Activated naive CD4-positive, alpha-beta T cell treated with anti-CD3 and anti-CD28 coated beads for 36 hours (primary cell): ENCODE measurements at regions of chr16 and their contacts with region 1.

Region 1: DNA sequence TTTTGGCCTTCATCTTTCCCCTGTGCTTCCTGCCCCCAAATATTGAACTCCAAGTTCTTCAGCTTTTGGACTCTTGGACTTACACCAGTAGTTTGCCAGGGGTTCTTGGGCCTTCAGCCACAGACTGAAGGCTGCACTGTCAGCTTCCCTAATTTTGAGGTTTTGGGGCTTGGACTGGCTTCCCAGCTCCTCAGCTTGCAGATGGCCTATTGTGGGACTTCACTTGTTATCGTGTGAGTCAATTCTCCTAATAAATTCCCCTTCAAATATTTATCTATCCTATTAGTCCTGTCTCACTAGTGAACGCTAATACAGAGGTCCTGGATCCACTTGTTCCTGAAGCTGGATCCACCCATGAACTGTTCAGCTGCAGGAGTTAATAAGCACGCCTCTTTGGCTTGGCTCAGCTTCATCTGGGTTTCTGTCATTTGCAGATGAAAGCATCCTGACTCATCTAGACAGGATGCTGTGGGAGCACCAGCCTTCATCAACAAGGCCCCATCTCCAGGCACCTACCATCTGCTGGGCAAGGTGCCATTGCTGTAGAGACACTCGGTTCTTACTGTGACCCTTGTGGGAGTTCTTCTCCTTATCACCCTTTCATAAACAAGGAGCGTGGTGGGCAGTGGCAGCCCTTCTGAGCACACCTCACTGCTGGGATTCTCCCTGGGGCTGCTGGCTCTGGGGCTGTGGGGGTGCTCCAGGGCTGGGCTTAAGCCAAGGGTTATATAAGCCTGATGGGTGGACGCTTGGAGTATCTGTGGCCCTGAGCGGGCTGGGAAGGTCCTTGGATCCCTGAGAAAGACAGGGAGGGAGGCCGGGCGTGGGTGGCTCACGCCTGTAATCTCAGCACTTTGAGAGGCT is 23.1 kb downstream of the LAT start:
- DNase-seq: peak; percentile 92
- H3K4me3 Mint-ChIP-seq: peak overlapping the region; percentile 20
- H3K27ac Mint-ChIP-seq: peak overlapping the region; percentile 83
- H3K4me1 Mint-ChIP-seq: peaks cover 52% of the 10 kb centered on the region
- H3K27me3 Mint-ChIP-seq: no peaks in the 10 kb centered on the region

Region 2: DNA sequence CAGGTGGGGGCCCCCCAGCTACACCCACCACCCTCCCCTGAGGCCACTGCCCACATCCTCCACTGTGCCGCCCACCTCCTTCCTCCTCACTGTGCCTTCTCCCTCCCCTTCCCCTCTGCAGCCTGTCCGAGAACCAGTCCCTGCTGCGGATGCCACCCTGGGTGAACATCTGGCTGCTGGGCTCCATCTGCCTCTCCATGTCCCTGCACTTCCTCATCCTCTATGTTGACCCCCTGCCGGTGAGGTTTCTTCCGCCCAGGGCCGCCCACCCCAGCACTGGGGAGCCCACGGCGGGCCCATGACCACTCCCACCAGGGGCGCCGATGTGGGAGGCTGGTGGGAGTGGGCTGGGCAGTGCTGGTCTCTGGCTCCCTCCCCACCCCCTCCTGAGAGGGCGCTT is 105.1 kb before region 1 on chr16:
- CTCF ChIA-PET with region 1: no interaction called
- intact Hi-C with region 1: no loop called
- DNase-seq: no peak
- H3K4me3 Mint-ChIP-seq: no peak overlapping the region
- H3K27ac Mint-ChIP-seq: no peak overlapping the region
- H3K4me1 Mint-ChIP-seq: peaks cover 3% of the 10 kb centered on the region
- H3K27me3 Mint-ChIP-seq: no peaks in the 10 kb centered on the region

Region 3: GRCh38 chr16:28974437-28975157 is 33.4 kb before region 1 on chr16 and contains the start of gene SPNS1:
- CTCF ChIA-PET with region 1: interaction called, 3 read pairs
- intact Hi-C with region 1: loop called (anchors 1 kb)
- DNase-seq: peak; percentile 97
- H3K4me3 Mint-ChIP-seq: peak within 1 kb of the TSS; percentile 97
- H3K27ac Mint-ChIP-seq: peak within 1 kb of the TSS; percentile 91
- H3K4me1 Mint-ChIP-seq: peaks cover 34% of the 10 kb centered on the region
- H3K27me3 Mint-ChIP-seq: no peaks in the 10 kb centered on the region
- total RNA-seq, gene SPNS1: 10.3 to 10.5 TPM

Region 4: DNA sequence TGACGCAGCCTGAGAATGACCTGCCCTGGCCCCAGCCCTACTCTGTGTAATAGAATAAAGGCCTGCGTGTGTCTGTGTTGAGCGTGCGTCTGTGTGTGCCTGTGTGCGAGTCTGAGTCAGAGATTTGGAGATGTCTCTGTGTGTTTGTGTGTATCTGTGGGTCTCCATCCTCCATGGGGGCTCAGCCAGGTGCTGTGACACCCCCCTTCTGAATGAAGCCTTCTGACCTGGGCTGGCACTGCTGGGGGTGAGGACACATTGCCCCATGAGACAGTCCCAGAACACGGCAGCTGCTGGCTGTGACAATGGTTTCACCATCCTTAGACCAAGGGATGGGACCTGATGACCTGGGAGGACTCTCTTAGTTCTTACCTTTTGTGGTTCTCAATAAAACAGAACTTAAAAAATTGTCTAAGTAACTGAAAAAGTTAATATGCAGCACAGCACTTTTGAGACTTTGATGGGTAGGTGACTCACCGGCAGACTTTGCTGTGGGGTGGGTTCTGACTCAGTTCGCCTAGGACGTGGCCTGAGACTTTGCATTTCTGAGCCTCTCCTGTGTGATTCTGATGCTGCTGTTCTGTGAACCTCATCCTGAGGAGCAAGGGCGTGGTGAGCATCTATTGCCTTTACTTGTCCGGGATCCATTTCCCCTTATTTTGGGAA is 17.5 kb before region 1 on chr16:
- CTCF ChIA-PET with region 1: interaction called, 4 read pairs
- intact Hi-C with region 1: loop called (anchors 1 kb)
- DNase-seq: peak; percentile 90
- H3K4me3 Mint-ChIP-seq: peak overlapping the region; percentile 11
- H3K27ac Mint-ChIP-seq: peak overlapping the region; percentile 99
- H3K4me1 Mint-ChIP-seq: peaks cover 65% of the 10 kb centered on the region
- H3K27me3 Mint-ChIP-seq: no peaks in the 10 kb centered on the region

Region 5: DNA sequence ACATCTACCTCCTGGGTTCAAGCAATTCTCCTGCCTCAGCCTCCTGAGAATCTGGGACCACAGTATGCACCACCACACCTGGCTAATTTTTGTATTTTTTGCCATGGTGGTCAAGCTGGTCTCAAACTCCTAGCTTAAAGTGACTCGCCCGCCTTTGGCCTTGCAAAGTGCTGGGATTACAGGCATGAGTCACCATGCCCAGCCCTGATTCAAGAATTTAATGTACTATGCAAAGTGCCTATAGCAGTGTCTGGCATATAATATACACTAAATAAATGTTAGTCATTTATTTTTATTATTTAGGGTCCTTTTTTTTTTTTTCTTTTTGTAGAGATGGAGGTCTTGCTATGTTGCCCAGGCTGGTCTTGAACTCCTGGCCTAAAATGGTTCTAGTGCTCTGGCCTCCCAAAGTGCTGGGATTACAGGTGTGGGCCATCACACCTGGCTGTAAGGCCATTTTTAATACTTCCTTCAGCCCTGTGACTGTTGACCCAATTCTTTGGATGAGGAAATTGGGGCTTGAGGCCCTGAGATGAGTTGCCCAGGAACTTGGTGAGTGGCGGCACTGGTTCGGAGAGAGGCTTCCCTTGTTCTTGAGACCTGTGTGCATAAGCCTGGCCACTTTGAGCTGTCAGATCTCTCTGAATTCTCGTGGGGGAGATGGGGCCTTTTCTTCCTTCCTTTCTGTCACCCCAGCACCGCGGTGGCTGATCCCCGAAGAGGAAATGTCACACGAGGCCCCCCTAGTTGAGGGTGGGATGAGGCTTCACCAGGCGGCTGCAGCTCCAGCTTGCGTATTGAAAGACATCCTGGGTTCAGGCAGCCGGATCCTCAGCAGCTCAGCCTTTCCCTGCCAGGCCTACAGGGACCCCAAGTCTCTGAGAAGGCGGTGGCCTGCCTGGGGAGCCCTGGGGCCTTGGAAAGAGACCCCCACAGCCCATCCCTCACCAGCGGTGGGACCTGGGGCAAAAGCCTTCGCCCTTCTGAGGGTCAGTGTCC is 15.6 kb after region 1 on chr16:
- CTCF ChIA-PET with region 1: interaction called, 14 read pairs
- intact Hi-C with region 1: loop called (anchors 1 kb)
- DNase-seq: no peak
- H3K4me3 Mint-ChIP-seq: no peak overlapping the region
- H3K27ac Mint-ChIP-seq: no peak overlapping the region
- H3K4me1 Mint-ChIP-seq: peaks cover 73% of the 10 kb centered on the region
- H3K27me3 Mint-ChIP-seq: no peaks in the 10 kb centered on the region

Region 6: GRCh38 chr16:29738514-29738913 is 730.6 kb after region 1 on chr16:
- CTCF ChIA-PET with region 1: no interaction called
- intact Hi-C with region 1: loop called (anchors 10 kb)
- DNase-seq: peak; percentile 68
- H3K4me3 Mint-ChIP-seq: no peak overlapping the region
- H3K27ac Mint-ChIP-seq: peak overlapping the region; percentile 76
- H3K4me1 Mint-ChIP-seq: peaks cover 78% of the 10 kb centered on the region
- H3K27me3 Mint-ChIP-seq: no peaks in the 10 kb centered on the region

Region 7: DNA sequence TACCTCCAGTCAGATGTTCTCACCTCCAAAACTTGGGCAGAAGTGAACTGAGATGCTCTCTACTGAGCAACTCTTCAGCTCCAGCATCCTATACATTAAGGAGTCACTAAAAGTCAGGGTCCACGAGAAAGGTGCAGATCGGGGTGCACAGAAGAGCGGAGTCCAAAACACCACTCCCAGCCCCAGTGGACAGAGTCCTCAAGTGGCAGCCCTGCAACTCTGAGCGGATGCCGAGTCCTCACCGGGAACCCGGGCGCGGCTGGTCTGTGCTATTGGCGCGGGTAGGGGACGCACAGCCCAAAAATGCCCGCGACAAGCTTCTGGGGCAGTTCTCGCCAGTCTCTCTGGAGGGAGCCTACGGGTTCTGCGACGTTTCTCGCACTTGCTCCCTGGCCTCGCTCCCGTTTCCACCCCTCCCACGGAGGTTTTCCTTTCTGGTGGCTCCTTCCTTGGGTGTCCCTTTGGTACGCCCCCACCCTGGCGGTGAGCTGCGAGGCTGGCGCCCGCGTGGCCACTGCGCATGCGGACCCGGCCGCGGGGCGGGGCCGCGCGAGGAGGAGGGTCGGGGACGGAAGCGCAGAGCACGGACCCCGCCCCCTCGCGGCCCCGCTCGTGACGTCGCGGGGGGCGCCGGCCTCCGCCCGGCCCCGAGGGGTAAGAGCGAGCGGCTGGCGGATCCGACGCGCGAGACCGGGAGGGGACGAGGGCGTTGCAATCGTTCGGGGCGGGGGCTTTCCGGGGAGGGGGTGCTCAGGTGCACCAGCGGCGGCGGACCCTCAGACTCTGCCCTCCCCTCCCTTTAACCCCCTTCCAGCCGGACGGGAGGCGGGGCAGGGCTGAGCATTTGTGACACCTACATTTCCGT is 953.7 kb after region 1 on chr16 and contains the start of gene TMEM219:
- CTCF ChIA-PET with region 1: no interaction called
- intact Hi-C with region 1: loop called (anchors 10 kb)
- DNase-seq: peak; percentile 88
- H3K4me3 Mint-ChIP-seq: peak within 1 kb of the TSS; percentile 87
- H3K27ac Mint-ChIP-seq: peak within 1 kb of the TSS; percentile 83
- H3K4me1 Mint-ChIP-seq: peaks cover 20% of the 10 kb centered on the region
- H3K27me3 Mint-ChIP-seq: no peaks in the 10 kb centered on the region
- total RNA-seq, gene TMEM219: 31.9 to 35.5 TPM